ENCODE measurements at regions of chr1 and their contacts with region 1.

Region 1: DNA sequence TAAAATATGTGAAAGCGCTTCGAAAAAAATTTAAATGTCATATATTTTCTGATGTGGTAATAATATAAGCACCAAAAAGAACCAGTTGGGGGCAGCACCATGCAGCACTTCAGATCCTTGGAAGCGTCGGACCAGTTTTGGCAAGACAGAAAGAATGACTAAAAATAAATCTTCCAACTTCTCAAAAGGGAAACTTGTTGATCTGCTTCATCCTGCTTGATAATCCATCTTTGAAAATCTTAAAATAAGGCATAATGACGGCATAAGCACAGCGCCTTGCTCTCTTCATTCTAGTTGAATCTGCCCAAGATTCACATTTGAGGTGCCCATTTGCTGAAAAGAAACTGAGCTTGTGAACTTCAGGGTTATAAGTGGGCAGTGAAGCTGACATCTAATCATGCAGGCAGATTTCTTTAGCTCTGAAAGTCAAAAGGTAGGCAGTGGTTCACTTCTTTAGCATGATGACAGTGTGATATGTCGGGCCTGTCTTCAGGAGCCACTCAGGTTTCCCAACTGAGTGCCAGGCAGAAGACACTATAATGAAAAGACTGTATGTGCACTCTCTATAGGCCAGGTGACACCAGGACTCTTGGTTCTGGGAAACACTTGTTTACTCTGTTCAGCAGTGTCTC is 19.8 kb upstream of the MUTYH start:
- DNase-seq: no peak
- CTCF ChIP-seq: peak; percentile 72

Region 2: GRCh38 chr1:45230540-45230939 is 129.5 kb before region 1 on chr1:
- in situ Hi-C with region 1: no loop called
- DNase-seq: no peak
- CTCF ChIP-seq: peak; percentile 19

Region 3: GRCh38 chr1:45490626-45491486 is 130.9 kb after region 1 on chr1 and contains the start of gene TESK2:
- in situ Hi-C with region 1: loop called (anchors 5 kb)
- DNase-seq: peak; percentile 95
- CTCF ChIP-seq: no peak

Region 4: DNA sequence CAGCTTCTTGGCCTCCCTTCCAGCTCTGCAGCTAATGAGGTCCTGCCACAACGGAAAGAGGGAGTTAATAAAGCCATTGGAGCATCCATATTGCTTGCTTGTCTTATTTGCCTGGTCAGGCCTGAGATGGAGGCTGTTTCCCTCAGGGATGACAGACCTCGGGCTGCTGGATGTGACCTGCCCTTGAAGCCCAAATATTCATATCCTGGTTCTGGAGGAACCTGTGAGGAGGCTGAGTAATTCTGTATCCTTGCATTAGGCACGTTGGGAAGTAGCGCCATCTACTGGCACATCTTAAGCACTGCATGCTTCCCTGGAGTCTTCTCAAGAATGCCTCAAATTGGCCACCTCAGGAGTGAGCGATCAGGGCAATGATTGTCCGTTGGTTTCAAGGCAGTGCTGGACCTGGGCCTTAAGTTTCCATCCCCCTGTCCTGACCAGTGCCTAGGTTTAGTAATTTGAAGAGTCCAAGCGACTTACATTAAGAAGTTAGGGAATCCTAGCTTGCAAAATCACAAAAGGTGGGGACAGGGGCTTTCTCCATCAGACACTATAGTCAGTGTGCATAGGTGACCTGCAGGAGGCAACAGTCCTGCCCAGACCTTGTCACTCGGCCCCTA is 210.1 kb after region 1 on chr1:
- in situ Hi-C with region 1: loop called (anchors 10 kb)
- DNase-seq: peak; percentile 70
- CTCF ChIP-seq: peak; percentile 98

Region 5: DNA sequence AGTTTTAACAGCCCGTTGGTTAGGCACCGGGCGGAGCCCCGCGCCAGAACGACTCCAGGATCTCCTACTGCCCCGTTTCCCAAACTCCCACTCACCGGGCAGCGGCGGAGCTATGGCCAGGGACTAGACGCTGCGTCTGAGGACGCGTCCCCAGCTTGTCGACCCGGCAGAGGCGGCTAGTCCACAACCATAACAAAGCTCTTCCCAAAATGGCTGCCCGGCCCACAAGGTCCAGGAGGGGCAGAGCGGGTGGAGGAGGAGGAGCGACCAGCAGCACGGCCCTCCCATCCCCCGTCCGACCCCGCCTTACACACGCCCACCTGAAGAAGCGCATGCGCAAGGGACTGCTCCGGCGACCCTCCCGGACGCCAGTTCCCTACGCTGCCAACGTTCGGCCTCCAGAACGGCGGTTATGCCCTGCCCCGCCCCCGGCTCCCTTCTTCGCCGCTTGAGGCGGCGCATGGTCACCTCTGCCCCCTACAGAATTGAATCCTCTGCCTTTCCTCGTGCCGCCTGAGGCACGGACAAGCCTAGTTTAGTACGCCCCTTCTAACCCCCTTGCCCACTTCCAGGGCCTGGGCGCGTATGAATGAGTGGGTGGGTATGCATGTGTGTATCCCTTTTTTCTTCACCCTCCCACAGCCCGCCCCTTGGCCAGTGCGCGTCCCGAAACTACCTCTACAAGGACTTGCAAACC is 326.5 kb after region 1 on chr1 and contains the start of gene GPBP1L1:
- in situ Hi-C with region 1: no loop called
- DNase-seq: peak; percentile 97
- CTCF ChIP-seq: no peak